ENCODE measurements at regions of chr3 and their contacts with region 1.

Region 1: GRCh38 chr3:16338999-16339398 is 74.0 kb downstream of the OXNAD1 start:
- DNase-seq: no peak

Region 2: GRCh38 chr3:16550676-16551341 is 211.8 kb after region 1 on chr3:
- in situ Hi-C with region 1: loop called (anchors 25 kb)
- DNase-seq: peak; percentile 91

Measured in SK-MEL-5 (cell line).